ENCODE measurements at regions of chr1 and their contacts with region 1.

Region 1: DNA sequence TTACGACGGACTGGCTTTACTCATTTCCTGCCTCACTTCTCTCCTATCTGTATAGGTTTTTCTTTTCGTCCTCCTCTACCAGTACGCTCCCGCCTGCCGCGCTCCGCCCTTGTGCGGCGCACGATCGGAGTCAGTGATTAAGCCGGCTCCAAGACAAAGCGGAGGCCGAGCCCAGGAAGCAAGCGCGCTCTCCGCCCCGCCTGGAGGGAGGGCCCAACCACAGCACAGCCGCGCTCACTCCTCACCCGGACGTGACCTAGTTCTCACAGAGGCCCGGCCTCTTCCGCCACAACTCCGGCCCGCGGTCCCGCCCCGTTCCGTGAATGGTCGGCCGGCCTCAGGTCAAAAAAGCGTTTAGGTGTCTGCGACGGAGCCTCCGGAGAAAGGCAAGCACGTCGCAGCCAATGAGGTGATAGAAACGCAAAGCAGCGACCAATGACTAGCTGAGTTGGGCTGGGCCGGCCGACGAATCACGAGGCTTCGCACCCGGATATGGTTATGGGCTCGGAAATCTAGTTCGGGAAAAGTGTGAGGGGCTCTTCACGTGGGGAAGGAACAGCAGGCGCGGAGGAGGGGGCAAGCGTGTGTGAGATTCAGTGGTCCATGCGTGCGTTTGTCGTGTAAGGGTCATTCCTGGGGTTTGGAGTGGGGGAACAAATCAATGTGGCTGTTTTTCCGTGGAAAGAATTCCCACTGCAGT is at the start of gene METTL13:
- DNase-seq: peak; percentile 99
- H3K4me3 Mint-ChIP-seq: peak within 1 kb of the TSS; percentile 100
- H3K27ac Mint-ChIP-seq: peak within 1 kb of the TSS; percentile 98
- H3K4me1 Mint-ChIP-seq: peaks cover 49% of the 10 kb centered on the region
- H3K27me3 Mint-ChIP-seq: no peaks in the 10 kb centered on the region
- total RNA-seq, gene METTL13: 39.5 to 40.9 TPM

Region 2: GRCh38 chr1:171422511-171422910 is 358.8 kb before region 1 on chr1:
- CTCF ChIA-PET with region 1: no interaction called
- intact Hi-C with region 1: loop called (anchors 1 kb)
- DNase-seq: no peak
- H3K4me3 Mint-ChIP-seq: no peak overlapping the region
- H3K27ac Mint-ChIP-seq: no peak overlapping the region
- H3K4me1 Mint-ChIP-seq: peaks cover 25% of the 10 kb centered on the region
- H3K27me3 Mint-ChIP-seq: no peaks in the 10 kb centered on the region

Region 3: GRCh38 chr1:171654942-171655745 is 126.2 kb before region 1 on chr1:
- CTCF ChIA-PET with region 1: interaction called, 3 read pairs
- intact Hi-C with region 1: loop called (anchors 1 kb)
- DNase-seq: peak; percentile 92
- H3K4me3 Mint-ChIP-seq: peak overlapping the region; percentile 39
- H3K27ac Mint-ChIP-seq: no peak overlapping the region
- H3K4me1 Mint-ChIP-seq: peaks cover 11% of the 10 kb centered on the region
- H3K27me3 Mint-ChIP-seq: peaks cover 5% of the 10 kb centered on the region

Region 4: DNA sequence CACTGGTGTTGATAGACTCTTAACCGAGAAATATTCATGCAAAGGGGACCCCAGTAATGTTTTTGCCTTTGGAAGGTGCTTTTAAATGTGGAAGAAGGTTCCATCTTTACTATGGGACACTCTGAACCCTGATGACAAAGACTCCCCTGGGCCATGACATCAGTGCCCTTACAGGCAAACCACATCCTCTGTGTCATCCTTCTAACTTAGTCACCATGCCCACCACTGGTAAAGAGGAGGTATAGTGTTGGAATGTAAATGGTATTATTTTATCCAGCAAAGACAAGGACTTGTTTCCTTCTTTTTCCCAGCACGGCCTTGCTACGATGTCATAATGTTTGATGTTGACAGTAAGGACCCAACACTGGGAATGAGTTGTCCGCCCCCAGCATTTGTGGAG is 12.8 kb after region 1 on chr1:
- CTCF ChIA-PET with region 1: interaction called, 4 read pairs
- intact Hi-C with region 1: loop called (anchors 1 kb)
- DNase-seq: peak; percentile 78
- H3K4me3 Mint-ChIP-seq: no peak overlapping the region
- H3K27ac Mint-ChIP-seq: peak overlapping the region; percentile 89
- H3K4me1 Mint-ChIP-seq: peaks cover 23% of the 10 kb centered on the region
- H3K27me3 Mint-ChIP-seq: no peaks in the 10 kb centered on the region

Region 5: DNA sequence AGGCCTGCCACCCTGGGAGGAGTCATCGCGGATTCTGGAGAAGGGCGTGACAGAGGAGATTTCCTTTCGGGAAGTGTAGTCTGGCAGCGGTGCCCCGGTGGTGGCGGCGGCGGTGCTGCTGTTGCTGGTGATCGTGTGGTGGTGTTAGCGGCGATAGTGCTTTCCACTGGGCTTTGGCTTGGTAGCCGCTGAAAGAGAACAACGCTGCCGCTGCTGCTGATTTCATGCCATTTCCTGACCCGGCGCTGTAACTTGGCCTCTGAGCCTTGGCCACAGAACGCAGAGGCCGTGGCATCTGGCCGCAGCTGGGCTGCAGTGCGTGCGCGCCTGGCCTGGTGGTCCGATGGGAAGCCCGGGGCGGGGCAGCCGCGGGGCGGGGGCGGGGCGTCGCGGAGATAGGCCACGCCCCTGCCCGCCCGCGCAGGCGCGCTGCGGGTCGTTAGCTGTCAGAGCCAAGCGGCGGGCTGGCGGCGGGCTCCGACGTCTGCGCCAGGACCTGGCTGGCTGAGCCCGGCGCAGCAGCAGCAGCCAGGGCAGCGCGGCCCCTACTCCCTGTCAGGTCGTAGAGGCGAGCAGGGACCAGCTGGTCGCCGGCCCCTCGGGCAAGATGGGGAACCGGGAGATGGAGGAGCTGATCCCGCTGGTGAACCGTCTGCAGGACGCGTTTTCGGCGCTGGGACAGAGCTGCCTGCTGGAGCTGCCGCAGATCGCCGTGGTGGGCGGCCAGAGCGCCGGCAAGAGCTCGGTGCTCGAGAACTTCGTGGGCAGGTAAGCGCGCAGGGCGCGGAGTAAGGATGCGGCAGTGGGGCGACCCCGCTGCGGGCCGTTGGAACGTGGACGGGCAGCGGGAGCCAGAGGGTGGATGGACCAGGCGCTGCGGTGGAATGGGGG is 60.0 kb after region 1 on chr1 and contains the start of gene DNM3:
- CTCF ChIA-PET with region 1: no interaction called
- intact Hi-C with region 1: loop called (anchors 1 kb)
- DNase-seq: peak; percentile 66
- H3K4me3 Mint-ChIP-seq: peak within 1 kb of the TSS; percentile 79
- H3K27ac Mint-ChIP-seq: no peak within 1 kb of the TSS
- H3K4me1 Mint-ChIP-seq: peaks cover 14% of the 10 kb centered on the region
- H3K27me3 Mint-ChIP-seq: peaks cover 13% of the 10 kb centered on the region
- total RNA-seq, gene DNM3: 0.96 to 0.98 TPM

Region 6: DNA sequence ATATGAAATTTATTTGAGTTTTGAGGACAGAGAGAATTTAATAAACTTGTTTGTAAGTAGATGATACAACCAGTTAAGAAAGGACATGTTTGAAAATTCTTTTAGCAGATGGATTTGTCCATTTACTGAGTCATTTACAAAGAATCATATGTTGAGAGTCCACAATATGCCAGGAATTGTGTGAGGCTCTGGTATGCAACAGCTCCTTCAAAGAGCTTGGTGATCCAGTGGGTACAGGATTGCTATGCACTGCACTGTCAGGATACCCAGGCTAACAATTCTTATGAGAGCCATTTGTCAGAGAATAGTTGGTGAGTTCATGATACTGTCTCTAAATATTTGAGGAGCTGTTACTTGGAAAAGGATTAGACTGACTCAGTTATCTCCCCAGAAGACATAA is 70.9 kb after region 1 on chr1:
- CTCF ChIA-PET with region 1: no interaction called
- intact Hi-C with region 1: no loop called
- DNase-seq: no peak
- H3K4me3 Mint-ChIP-seq: no peak overlapping the region
- H3K27ac Mint-ChIP-seq: no peak overlapping the region
- H3K4me1 Mint-ChIP-seq: no peaks in the 10 kb centered on the region
- H3K27me3 Mint-ChIP-seq: peaks cover 3% of the 10 kb centered on the region

Region 7: GRCh38 chr1:171877701-171878100 is 96.4 kb after region 1 on chr1:
- CTCF ChIA-PET with region 1: no interaction called
- intact Hi-C with region 1: no loop called
- DNase-seq: no peak
- H3K4me3 Mint-ChIP-seq: no peak overlapping the region
- H3K27ac Mint-ChIP-seq: no peak overlapping the region
- H3K4me1 Mint-ChIP-seq: no peaks in the 10 kb centered on the region
- H3K27me3 Mint-ChIP-seq: no peaks in the 10 kb centered on the region

Measured in activated naive CD4-positive, alpha-beta T cell treated with anti-CD3 and anti-CD28 coated beads for 36 hours (primary cell).